A549 (cell line): ENCODE measurements at regions of chr10 and their contacts with region 1.

Region 1: DNA sequence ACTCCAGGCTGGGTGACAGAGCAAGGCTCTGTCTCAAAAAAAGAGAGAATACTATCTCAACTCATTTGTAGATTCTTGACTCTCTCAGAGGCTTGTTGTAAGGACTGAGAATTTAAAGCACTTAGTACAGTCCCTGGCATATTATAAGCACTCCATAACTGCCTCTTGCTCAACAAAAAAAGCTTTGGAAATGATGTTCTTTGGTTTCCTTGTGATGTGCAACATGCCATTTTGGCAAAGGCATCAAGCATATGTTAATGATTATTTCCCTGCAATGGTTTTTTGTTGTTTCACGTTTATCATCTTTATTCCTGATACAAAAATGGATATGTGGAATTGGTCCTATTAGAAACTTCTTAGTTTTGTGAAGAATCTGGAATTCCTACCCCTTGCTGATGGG is 15.7 kb downstream of the NOLC1 start:
- DNase-seq: no peak
- ATAC-seq: 0 out of 6 replicates have a peak, but pooled peaks of 1 of the 2 experiments have one; percentile 12
- H3K4me3 ChIP-seq: no peak overlapping the region
- H3K27ac ChIP-seq: no peak overlapping the region
- H3K4me1 ChIP-seq: peaks cover 3% of the 10 kb centered on the region; the same call in 1 of the 3 replicates
- CTCF ChIP-seq: no peak
- EP300 ChIP-seq: no peak
- POLR2A ChIP-seq: no peak
- RAD21 ChIP-seq: no peak

Region 2: GRCh38 chr10:102140184-102140583 is 27.7 kb before region 1 on chr10:
- CTCF ChIA-PET with region 1: interaction called, 25 read pairs
- POLR2A ChIA-PET with region 1: no interaction called
- DNase-seq: no peak
- ATAC-seq: peak in 1 of 2 experiments; percentile 8; a peak in 3 of 6 replicates
- H3K4me3 ChIP-seq: no peak overlapping the region
- H3K27ac ChIP-seq: no peak overlapping the region
- H3K4me1 ChIP-seq: peaks cover 16% of the 10 kb centered on the region
- CTCF ChIP-seq: no peak
- EP300 ChIP-seq: no peak
- POLR2A ChIP-seq: no peak
- RAD21 ChIP-seq: no peak

Region 3: DNA sequence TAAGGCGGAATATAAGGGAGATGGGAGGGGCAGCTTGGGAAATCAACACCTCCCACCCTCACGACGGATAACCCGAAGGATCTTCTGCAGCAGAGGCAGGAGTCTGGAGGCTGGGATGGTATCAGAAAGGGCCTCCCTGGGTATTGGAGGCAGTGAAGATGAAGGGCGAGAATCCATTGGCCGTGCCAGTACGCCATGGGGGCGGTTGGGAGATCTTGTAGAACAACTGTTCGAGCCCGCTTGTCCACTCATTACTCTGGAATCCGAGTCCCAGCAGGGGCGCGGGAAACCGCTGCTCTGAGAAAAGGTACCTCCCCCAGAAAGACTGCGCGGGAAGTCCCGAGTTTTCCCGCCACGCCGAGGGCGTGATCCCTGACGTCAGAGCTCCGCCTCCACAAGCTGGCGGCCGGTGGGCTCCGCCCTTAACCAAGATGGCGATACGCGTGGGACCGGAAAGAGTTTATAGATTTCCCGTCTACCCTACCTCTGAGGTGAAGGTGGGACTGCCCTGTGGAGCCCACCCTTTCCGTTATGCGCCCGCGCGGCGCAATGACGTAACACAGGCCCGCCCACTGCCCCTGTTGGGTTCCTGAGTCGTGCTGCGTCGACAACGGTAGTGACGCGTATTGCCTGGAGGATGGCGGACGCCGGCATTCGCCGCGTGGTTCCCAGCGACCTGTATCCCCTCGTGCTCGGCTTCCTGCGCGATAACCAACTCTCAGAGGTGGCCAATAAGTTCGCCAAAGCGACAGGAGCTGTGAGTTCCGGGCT is 15.9 kb before region 1 on chr10 and contains the start of gene NOLC1:
- CTCF ChIA-PET with region 1: interaction called, 73 read pairs
- POLR2A ChIA-PET with region 1: no interaction called
- DNase-seq: peak; percentile 92 to 99
- ATAC-seq: peak; percentile 86 to 92
- H3K4me3 ChIP-seq: peak within 1 kb of the TSS; percentile 75
- H3K27ac ChIP-seq: peak within 1 kb of the TSS; percentile 86 to 91
- H3K4me1 ChIP-seq: peaks cover 28% of the 10 kb centered on the region
- CTCF ChIP-seq: no peak
- EP300 ChIP-seq: no peak
- POLR2A ChIP-seq: peak; percentile 94
- RAD21 ChIP-seq: no peak
- polyA plus RNA-seq, gene NOLC1: 128 and 188 TPM in 2 replicates

Region 4: DNA sequence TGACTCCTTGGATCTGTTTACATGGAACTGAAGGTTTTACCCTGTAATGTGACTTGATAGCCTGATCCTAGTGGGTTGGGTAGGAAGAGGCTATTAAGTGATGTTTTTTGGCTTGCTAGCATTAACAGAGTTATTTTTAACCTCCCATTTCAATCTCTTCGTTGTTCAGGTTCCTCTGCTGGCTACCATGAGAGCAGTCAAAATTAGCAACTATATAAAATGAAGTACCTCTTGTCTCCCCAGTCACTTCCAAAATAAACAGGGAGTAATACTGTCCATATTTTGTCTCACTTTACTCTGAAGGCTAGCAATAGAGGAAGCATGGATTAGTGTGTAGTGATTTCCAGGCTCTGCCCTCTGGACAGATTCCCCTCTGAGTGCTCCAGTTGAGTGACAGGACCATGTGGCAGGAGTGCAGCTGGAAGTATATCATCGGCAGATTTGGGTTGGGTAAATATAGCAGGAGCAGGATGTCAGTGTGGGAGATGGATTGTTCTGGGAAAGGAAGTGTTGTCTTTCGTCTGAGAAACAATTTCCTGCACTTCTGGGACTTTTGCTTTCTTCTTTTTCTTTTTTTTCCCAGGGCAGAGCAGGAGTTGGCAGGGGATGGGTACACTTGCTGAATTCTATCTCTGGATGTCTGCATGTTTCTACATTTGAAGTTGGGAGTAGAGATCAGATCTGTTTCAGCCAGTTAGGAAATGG is 112.7 kb after region 1 on chr10:
- CTCF ChIA-PET with region 1: no interaction called
- POLR2A ChIA-PET with region 1: no interaction called
- DNase-seq: no peak
- ATAC-seq: peak in 1 of 2 experiments; percentile 40; a peak in 3 of 6 replicates
- H3K4me3 ChIP-seq: no peak overlapping the region
- H3K27ac ChIP-seq: no peak overlapping the region
- H3K4me1 ChIP-seq: no peaks in the 10 kb centered on the region
- CTCF ChIP-seq: no peak
- EP300 ChIP-seq: no peak
- POLR2A ChIP-seq: no peak
- RAD21 ChIP-seq: no peak